ENCODE measurements at regions of chr2 and their contacts with region 1.

Region 1: DNA sequence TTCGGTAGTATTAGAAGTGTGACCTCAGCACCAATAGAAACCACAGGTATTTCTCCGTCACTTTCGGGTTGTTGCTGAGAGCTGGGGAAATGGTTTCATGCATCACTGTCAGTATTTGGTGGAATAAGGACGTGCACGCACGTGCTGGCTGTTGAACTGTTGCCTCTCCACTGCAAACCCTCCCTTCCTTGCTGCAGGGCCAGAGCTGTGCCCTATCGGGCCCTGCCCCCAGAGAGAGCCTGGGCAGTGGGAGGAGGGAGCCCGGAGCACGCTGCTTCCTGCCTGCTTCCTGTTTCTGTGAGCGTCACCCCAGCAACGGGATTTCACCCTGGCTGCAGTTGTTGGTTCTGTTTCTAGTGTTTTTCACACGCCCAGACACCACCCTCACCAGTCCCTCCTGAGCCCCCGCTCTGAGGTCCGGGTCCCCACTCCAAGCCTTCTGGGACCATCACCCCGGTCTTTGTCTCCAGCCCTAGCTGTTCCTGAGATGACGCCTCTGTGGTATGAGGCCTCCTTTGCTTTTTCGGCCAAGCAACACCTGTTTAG is 47.4 kb downstream of the LRRFIP1 start:
- DNase-seq: no peak
- ATAC-seq: 0 out of 6 replicates have a peak, but pooled peaks of 1 of the 2 experiments have one; percentile 14
- H3K4me3 ChIP-seq: no peak overlapping the region
- H3K27ac ChIP-seq: no peak overlapping the region
- H3K4me1 ChIP-seq: peaks cover under 1% of the 10 kb centered on the region; the same call in 2 of the 3 replicates
- CTCF ChIP-seq: no peak
- EP300 ChIP-seq: no peak
- POLR2A ChIP-seq: no peak
- RAD21 ChIP-seq: no peak

Region 2: DNA sequence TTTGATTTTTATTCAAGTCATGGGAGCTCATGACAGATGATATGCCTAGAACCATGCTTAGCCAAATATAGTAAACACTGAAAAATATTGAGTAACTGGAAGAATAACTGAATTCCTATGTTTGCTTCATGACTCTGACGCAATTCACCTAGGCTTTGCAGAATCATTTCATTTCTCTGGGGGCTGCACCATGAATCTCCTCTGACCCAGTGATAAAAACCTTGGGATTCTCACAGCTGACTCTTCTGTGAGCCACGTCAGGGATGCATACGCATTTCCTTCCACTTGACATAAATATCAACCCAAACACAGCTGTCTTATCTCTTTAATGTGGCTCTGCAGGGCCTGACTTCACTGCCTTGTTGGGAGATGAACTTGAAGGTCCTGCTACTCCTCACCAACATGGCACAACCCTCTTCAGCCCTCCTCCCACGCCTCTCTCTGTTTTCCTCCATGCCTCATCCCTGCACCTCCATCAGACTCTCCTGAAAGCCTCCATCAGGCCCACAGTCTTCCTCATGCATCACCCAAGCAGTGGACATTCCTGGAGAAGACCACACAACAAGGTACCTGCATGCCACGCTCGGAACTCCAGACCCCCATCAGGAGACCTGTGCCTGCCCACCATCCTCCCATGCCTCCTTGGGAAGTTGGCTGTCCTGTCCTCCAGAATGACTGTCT is 290.7 kb before region 1 on chr2:
- CTCF ChIA-PET with region 1: no interaction called
- POLR2A ChIA-PET with region 1: no interaction called
- DNase-seq: no peak
- ATAC-seq: no peak
- H3K4me3 ChIP-seq: no peak overlapping the region
- H3K27ac ChIP-seq: no peak overlapping the region
- H3K4me1 ChIP-seq: no peaks in the 10 kb centered on the region
- CTCF ChIP-seq: no peak
- EP300 ChIP-seq: no peak
- POLR2A ChIP-seq: no peak
- RAD21 ChIP-seq: no peak

Region 3: DNA sequence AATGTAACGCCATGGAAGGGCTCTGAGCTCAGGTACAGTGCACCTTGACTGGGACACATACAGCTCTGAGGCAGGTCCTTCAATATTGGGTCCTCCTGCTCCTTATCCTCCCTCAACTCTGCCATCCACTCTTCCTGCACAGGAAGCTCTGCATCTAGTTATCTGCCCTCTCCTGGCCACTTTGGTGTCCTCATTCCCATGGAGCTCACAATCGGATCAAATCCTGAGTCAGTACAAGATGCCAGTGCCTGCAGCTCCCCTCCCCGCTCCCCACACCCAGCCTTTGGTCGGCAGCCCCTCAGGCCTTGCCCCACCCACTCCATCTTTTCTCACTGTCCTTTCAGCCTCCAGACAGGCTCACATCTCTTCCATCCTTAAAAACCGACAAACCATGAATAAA is 10.6 kb after region 1 on chr2:
- CTCF ChIA-PET with region 1: interaction called, 77 read pairs
- POLR2A ChIA-PET with region 1: interaction called, 3 read pairs
- DNase-seq: peak in 1 of 2 experiments; percentile 66
- ATAC-seq: peak; percentile 75 to 83
- H3K4me3 ChIP-seq: no peak overlapping the region
- H3K27ac ChIP-seq: no peak overlapping the region
- H3K4me1 ChIP-seq: peaks cover 24% of the 10 kb centered on the region
- CTCF ChIP-seq: peak; percentile 34; the same call in 2 of the 3 replicates
- EP300 ChIP-seq: no peak
- POLR2A ChIP-seq: no peak
- RAD21 ChIP-seq: peak in 1 of 2 experiments; percentile 24; a peak in 1 of 5 replicates

Region 4: GRCh38 chr2:237700512-237701032 is 25.8 kb after region 1 on chr2:
- CTCF ChIA-PET with region 1: interaction called, 34 read pairs
- POLR2A ChIA-PET with region 1: no interaction called
- DNase-seq: no peak
- ATAC-seq: no peak
- H3K4me3 ChIP-seq: no peak overlapping the region
- H3K27ac ChIP-seq: no peak overlapping the region
- H3K4me1 ChIP-seq: peaks cover 67% of the 10 kb centered on the region
- CTCF ChIP-seq: no peak
- EP300 ChIP-seq: no peak
- POLR2A ChIP-seq: no peak
- RAD21 ChIP-seq: no peak

Region 5: GRCh38 chr2:237723602-237724001 is 48.8 kb after region 1 on chr2:
- CTCF ChIA-PET with region 1: interaction called, 28 read pairs
- POLR2A ChIA-PET with region 1: no interaction called
- DNase-seq: peak; percentile 51 to 72
- ATAC-seq: peak; percentile 88 to 94
- H3K4me3 ChIP-seq: no peak overlapping the region
- H3K27ac ChIP-seq: peak overlapping the region in 1 of 2 experiments; percentile 39; a peak in 1 of 6 replicates
- H3K4me1 ChIP-seq: peaks cover 57% of the 10 kb centered on the region
- CTCF ChIP-seq: no peak
- EP300 ChIP-seq: no peak
- POLR2A ChIP-seq: no peak
- RAD21 ChIP-seq: 0 out of 5 replicates have a peak, but pooled peaks of 1 of the 2 experiments have one; percentile 6

Region 6: GRCh38 chr2:237752761-237753165 is 78.0 kb after region 1 on chr2:
- CTCF ChIA-PET with region 1: interaction called, 295 read pairs
- POLR2A ChIA-PET with region 1: no interaction called
- DNase-seq: no peak
- ATAC-seq: no peak
- H3K4me3 ChIP-seq: no peak overlapping the region
- H3K27ac ChIP-seq: no peak overlapping the region
- H3K4me1 ChIP-seq: no peaks in the 10 kb centered on the region
- CTCF ChIP-seq: no peak
- EP300 ChIP-seq: no peak
- POLR2A ChIP-seq: no peak
- RAD21 ChIP-seq: no peak

Region 7: GRCh38 chr2:237782181-237782580 is 107.4 kb after region 1 on chr2:
- CTCF ChIA-PET with region 1: interaction called, 45 read pairs
- POLR2A ChIA-PET with region 1: no interaction called
- DNase-seq: no peak
- ATAC-seq: peak; percentile 28 to 34; a peak in 1 of 6 replicates
- H3K4me3 ChIP-seq: no peak overlapping the region
- H3K27ac ChIP-seq: no peak overlapping the region
- H3K4me1 ChIP-seq: no peaks in the 10 kb centered on the region
- CTCF ChIP-seq: no peak
- EP300 ChIP-seq: no peak
- POLR2A ChIP-seq: no peak
- RAD21 ChIP-seq: no peak